Activated B cell treated with CpG ODN at 0.5 μM for 24 hours (primary cell): ENCODE measurements at regions of chr12 and their contacts with region 1.

Region 1: GRCh38 chr12:64222009-64222765 is at the start of gene KICS2:
- DNase-seq: peak; percentile 90
- ATAC-seq: peak; percentile 86
- H3K4me3 Mint-ChIP-seq: peak within 1 kb of the TSS; percentile 96
- H3K27ac Mint-ChIP-seq: peak within 1 kb of the TSS; percentile 97
- H3K4me1 Mint-ChIP-seq: peaks cover 27% of the 10 kb centered on the region
- H3K27me3 Mint-ChIP-seq: no peaks in the 10 kb centered on the region
- CTCF ChIP-seq: no peak
- total RNA-seq, gene KICS2: 16.5 and 16.8 TPM in 2 replicates

Region 2: DNA sequence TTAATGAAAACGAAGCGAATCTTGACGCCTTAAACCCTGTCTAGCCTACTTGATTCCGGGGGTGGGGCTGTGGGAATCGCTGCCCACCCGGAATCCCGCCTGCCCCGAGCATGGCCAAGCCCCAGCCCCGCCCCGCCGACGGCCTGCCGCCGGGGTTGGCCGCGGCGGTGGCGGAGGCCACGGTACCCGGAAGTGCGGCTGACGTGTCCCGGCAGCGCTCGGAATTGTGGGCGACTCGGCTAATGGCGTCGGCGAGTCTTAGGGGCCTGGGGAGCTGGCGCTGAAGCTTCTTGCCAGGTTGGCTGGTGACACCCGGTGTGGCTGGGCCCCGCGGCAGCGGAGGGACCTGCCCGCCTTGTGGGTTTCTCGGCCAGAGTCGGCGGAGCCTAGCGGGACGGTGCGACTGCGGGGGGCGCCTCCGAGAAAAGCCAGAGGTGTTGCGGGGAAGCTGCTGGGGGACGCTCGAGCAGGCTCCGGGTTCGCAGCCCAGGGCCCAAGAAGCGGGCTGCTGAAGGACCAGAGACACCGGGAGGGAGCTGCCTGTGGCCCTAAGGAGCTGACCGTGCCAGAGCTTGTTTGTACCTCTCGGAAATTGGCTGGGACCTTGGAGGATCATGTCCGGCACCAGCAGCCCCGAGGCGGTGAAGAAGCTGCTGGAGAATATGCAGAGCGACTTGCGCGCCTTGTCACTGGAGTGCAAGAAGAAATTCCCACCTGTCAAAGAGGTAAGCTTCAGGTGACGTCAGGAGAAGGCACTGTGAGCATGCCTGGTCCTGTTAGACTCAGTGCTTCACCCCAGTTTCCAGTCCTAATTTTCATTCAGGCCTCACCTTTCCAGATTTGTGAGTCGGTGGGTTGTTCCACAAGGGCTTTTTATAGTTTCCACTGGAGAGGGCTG is 1755.3 kb before region 1 on chr12 and contains the start of gene MON2:
- CTCF ChIA-PET with region 1: no interaction called
- POLR2A ChIA-PET with region 1: no interaction called
- intact Hi-C with region 1: loop called (anchors 5 kb)
- DNase-seq: peak; percentile 85
- ATAC-seq: peak; percentile 96
- H3K4me3 Mint-ChIP-seq: peak within 1 kb of the TSS; percentile 84
- H3K27ac Mint-ChIP-seq: peak within 1 kb of the TSS; percentile 84
- H3K4me1 Mint-ChIP-seq: peaks cover 28% of the 10 kb centered on the region
- H3K27me3 Mint-ChIP-seq: no peaks in the 10 kb centered on the region
- CTCF ChIP-seq: no peak
- total RNA-seq, gene MON2: 51.6 and 69.9 TPM in 2 replicates

Region 3: GRCh38 chr12:63779498-63780481 is 442.4 kb before region 1 on chr12 and contains the start of gene RXYLT1:
- CTCF ChIA-PET with region 1: no interaction called
- POLR2A ChIA-PET with region 1: interaction called, 4 read pairs
- intact Hi-C with region 1: loop called (anchors 1 kb)
- DNase-seq: peak; percentile 82
- ATAC-seq: peak; percentile 93
- H3K4me3 Mint-ChIP-seq: peak within 1 kb of the TSS; percentile 98
- H3K27ac Mint-ChIP-seq: peak within 1 kb of the TSS; percentile 90
- H3K4me1 Mint-ChIP-seq: peaks cover 20% of the 10 kb centered on the region
- H3K27me3 Mint-ChIP-seq: no peaks in the 10 kb centered on the region
- CTCF ChIP-seq: no peak
- total RNA-seq, gene RXYLT1: 16.3 and 22.7 TPM in 2 replicates

Region 4: GRCh38 chr12:63843721-63844390 is 378.3 kb before region 1 on chr12:
- CTCF ChIA-PET with region 1: no interaction called
- POLR2A ChIA-PET with region 1: interaction called, 8 read pairs
- intact Hi-C with region 1: loop called (anchors 1 kb)
- DNase-seq: peak; percentile 69
- ATAC-seq: peak; percentile 92
- H3K4me3 Mint-ChIP-seq: peak overlapping the region; percentile 74
- H3K27ac Mint-ChIP-seq: no peak overlapping the region
- H3K4me1 Mint-ChIP-seq: peaks cover 9% of the 10 kb centered on the region
- H3K27me3 Mint-ChIP-seq: peaks cover 24% of the 10 kb centered on the region
- CTCF ChIP-seq: peak; percentile 43

Region 5: DNA sequence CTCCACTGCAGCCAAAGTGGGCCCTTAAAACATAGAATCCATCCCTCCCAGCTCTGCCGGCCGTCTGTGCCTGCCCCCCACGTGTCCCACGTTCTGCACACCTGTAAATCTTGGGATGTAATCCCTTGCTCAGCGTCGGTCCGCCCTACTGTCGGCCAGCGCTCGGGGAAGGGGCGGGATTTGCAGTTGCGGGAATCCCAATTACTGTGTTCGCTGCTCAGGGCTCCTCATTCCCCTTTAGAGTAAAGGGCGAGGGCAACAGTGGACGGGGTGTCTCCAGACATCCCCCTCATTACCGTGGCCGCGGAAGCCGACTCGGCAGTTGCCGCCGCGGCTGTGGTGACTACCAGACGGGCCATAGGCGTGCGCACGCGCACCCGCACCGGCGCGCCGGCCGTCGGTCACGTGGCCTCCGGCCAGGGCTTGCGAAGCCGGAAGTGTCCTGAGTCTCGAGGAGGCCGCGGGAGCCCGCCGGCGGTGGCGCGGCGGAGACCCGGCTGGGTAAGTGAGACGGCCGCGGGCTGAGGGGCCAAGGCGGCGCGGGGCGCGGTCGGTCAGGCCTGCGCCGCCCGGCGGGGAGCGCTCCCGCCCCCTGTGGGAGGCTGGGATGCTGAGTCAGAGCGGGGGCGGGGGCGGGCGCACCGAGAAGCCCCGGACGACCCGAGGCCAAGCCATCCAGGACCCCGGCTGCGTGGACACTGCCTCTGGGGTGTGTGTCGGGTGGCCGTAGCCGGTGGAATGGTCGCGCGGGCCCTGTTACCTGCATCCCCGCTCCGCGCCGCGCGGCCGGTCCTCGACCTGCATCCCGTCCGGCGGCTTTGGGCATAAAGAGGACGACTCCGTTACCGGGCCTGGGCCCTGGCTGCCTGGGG is 229.7 kb after region 1 on chr12 and contains the start of gene TBK1:
- CTCF ChIA-PET with region 1: no interaction called
- POLR2A ChIA-PET with region 1: no interaction called
- intact Hi-C with region 1: loop called (anchors 5 kb)
- DNase-seq: peak; percentile 82
- ATAC-seq: peak; percentile 82
- H3K4me3 Mint-ChIP-seq: peak within 1 kb of the TSS; percentile 97
- H3K27ac Mint-ChIP-seq: peak within 1 kb of the TSS; percentile 88
- H3K4me1 Mint-ChIP-seq: peaks cover 44% of the 10 kb centered on the region
- H3K27me3 Mint-ChIP-seq: no peaks in the 10 kb centered on the region
- CTCF ChIP-seq: no peak
- total RNA-seq, gene TBK1: 32.6 and 37.4 TPM in 2 replicates

Region 6: GRCh38 chr12:64759035-64759901 is 537.1 kb after region 1 on chr12 and contains the start of gene GNS:
- CTCF ChIA-PET with region 1: no interaction called
- POLR2A ChIA-PET with region 1: no interaction called
- intact Hi-C with region 1: loop called (anchors 5 kb)
- DNase-seq: peak; percentile 98
- ATAC-seq: peak; percentile 93
- H3K4me3 Mint-ChIP-seq: peak within 1 kb of the TSS; percentile 92
- H3K27ac Mint-ChIP-seq: peak within 1 kb of the TSS; percentile 83
- H3K4me1 Mint-ChIP-seq: peaks cover 41% of the 10 kb centered on the region
- H3K27me3 Mint-ChIP-seq: no peaks in the 10 kb centered on the region
- CTCF ChIP-seq: no peak
- total RNA-seq, gene GNS: 16.3 and 17.7 TPM in 2 replicates